GM23248 (cell line): ENCODE measurements at regions of chr18 and their contacts with region 1.

Region 1: GRCh38 chr18:59459369-59460079 is 100.5 kb upstream of the LMAN1 start:
- DNase-seq: peak; percentile 68
- H3K4me3 ChIP-seq: no peak overlapping the region
- H3K27ac ChIP-seq: no peak overlapping the region
- H3K4me1 ChIP-seq: peaks cover 7% of the 10 kb centered on the region; the same call in 1 of the 2 replicates
- H3K27me3 ChIP-seq: no peaks in the 10 kb centered on the region

Region 2: DNA sequence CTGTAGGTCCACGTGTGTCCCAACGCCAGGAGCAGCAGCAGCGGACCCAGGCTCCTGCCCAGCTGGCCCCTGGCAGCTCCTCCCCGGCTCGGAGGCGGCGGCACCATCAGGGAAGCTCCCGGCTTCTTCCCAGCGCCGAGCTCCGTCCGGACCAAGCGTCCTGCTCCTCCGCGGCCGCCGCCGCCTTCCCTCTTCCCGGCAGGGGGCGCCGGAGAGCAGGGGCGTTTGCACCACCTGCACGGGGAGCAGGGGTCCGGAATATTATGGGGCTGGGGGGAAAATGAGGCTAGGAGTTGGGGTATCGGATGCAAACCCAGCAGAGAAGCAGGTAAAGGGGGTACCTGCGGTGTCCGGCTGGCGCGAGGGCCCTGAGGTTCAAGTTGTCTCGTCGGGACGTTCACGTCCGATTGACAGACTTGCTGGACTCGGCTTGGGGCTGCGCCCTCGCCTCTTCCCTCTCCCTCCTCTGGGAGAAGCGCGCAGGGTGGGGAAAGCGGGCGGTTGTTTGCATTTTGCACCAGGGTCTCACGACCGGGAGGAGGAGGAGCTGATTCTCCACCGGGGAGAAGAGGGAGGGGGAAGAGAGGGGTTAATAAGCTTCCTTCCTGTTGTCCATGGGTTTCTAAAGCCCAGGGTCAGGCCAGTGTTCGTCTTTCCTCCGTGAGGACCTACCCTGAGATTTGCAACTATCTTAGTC is 237.9 kb after region 1 on chr18 and contains the start of gene CCBE1:
- in situ Hi-C with region 1: loop called (anchors 10 kb)
- DNase-seq: peak; percentile 85
- H3K4me3 ChIP-seq: peak within 1 kb of the TSS; percentile 94
- H3K27ac ChIP-seq: no peak within 1 kb of the TSS
- H3K4me1 ChIP-seq: peaks cover 17% of the 10 kb centered on the region; the same call in 1 of the 2 replicates
- H3K27me3 ChIP-seq: no peaks in the 10 kb centered on the region
- total RNA-seq, gene CCBE1: 11.4 and 16.6 TPM in 2 replicates

Region 3: DNA sequence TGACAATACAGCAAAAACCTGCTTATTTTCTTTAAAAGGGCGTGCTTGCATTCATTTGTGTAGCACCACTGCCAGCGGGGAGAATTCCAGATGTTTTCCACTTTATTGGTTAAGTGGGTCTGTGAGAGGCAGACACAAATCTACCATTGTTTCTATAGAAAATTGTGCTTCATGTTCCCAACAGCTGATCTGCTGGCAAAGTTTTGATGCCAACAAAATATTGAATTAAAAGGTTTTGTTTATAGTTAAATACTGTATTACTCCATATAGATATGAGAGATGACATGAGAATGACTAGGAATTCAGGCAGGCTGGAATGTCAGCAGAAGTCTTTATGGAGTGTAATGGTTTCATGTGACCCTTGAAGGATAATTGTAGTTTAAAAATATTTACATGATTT is 730.3 kb after region 1 on chr18:
- in situ Hi-C with region 1: no loop called
- DNase-seq: no peak
- H3K4me3 ChIP-seq: no peak overlapping the region
- H3K27ac ChIP-seq: no peak overlapping the region
- H3K4me1 ChIP-seq: no peaks in the 10 kb centered on the region
- H3K27me3 ChIP-seq: no peaks in the 10 kb centered on the region